AG04450 (cell line): ENCODE measurements at regions of chr13 and their contacts with region 1.

Region 1: DNA sequence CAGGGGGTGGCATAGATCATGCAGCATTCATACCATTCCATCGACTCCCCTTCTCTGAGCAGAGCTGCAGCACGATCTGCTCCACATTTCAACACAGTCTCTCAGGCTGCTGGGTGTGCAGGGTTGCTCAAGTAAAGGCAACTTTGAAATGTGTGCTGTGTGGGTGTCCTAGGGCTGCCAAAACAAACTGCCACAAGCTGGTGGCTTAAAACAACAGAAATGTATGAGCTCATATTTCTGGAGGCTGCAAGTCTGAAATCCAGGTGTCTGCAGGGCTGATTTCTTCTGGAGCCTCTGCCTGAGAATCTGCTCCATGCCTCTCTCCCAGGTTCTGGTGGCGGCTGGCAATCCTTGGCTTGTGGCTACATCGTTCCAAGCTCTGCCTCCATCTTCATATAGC is 63.7 kb upstream of the WDFY2 start:
- DNase-seq: peak; percentile 59
- H3K4me3 ChIP-seq: no peak overlapping the region
- H3K27ac ChIP-seq: peak overlapping the region; percentile 33
- H3K27me3 ChIP-seq: no peaks in the 10 kb centered on the region
- CTCF ChIP-seq: no peak

Region 2: DNA sequence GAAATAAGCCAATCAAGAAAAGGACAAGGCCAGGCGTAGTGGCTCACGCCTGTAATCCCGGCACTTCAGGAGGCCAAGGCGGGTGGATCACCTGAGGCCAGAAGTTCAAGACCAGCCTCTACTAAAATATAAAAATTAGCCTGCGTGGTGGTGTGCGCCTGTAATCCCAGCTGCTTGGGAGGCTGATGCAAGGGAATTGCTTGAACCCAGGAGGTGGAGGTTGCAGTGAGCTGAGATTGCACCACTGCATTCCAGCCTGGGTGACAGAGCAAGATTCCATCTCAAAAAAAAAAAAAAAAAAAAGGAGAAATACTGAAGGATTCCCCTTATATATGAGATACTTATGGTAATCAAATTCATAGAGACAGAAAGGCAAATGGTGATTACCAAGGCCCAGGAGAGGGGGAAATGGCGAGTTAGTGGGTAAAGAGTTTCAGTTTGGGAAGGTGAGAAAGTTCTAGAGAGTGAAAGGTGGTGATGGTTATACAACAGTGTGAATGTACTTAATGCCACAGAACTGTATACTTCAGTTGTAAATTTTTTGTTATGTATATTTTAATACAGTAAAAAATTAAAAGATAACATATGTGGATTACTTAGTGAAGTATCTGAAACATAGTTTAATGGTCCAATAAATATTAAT is 193.2 kb after region 1 on chr13:
- CTCF ChIA-PET with region 1: interaction called, 4 read pairs
- POLR2A ChIA-PET with region 1: interaction called, 12 read pairs
- DNase-seq: no peak
- H3K4me3 ChIP-seq: no peak overlapping the region
- H3K27ac ChIP-seq: no peak overlapping the region
- H3K27me3 ChIP-seq: no peaks in the 10 kb centered on the region
- CTCF ChIP-seq: no peak